ENCODE measurements at regions of chr11 and their contacts with region 1.

Region 1: DNA sequence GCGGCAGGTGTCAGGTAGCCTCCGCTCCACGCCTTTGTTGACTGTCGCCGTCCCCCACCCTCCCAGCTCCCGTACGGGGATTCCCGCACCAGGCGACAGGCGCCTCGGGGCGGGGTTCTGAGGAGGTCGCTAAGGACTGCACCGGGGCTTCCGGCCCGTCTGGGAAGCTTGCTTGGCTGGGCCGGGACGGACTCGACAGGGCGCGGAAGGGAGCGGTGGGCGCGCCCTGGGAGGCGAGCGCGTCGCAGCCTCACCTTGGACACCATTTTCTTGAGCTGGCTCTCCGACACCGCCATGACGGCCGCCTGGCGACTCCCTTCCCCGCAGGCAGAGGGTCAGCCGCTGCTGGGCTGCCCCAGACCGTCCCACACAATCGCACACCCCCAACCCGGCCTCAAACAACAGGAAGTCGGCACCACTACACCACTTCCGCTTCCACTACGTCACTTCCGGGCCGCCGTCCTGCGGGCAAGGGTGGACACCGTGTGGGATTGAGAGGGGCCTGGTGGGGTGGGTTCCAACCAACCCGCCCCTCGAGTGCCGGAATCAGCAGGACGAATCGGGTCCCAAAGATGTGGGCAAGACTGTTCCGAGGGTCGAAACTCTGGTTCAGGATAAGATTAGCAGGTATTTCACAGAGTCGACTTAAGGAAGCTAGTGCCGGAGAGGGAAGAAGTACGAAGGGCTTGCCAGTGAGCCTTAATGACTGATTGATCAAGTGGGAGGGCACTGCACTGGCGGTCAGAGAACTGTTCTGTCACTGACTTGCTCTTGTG is at the start of gene TSG101:
- DNase-seq: peak; percentile 94
- H3K4me3 Mint-ChIP-seq: peak within 1 kb of the TSS; percentile 100
- H3K27ac Mint-ChIP-seq: peak within 1 kb of the TSS; percentile 100
- H3K4me1 Mint-ChIP-seq: peaks cover 45% of the 10 kb centered on the region
- H3K27me3 Mint-ChIP-seq: no peaks in the 10 kb centered on the region
- total RNA-seq, gene TSG101: 33.2 to 40.5 TPM

Region 2: DNA sequence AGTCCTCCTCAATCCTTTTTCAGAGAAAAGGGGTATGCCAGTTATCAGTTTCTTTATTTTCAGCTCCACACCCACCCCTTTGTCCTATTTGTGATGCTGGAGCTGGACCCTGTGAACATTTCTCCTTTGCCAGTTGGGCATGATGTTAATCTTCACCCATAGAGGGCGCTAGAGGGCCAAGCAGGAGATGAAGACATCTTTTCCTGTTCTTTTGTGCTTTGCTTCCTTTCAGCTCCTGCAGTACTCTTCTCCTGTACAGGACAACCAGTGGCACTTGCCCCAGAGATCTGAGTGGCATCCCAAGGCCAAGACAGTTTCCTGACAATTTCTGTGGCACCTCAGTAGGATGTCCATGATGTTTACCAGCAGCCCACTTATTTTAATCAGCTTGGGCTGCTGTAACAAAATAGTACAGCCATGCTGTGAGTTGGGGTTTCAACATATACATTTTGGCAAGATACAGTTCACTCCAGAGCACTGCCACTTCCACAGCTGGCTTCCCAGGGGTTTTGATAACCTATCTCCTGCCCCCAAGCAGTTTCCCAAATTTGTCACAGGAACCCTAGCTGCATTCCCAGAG is 282.8 kb before region 1 on chr11:
- CTCF ChIA-PET with region 1: interaction called, 11 read pairs
- intact Hi-C with region 1: loop called (anchors 1 kb)
- DNase-seq: peak; percentile 81
- H3K4me3 Mint-ChIP-seq: no peak overlapping the region
- H3K27ac Mint-ChIP-seq: no peak overlapping the region
- H3K4me1 Mint-ChIP-seq: peaks cover 6% of the 10 kb centered on the region
- H3K27me3 Mint-ChIP-seq: peaks cover 4% of the 10 kb centered on the region

Region 3: DNA sequence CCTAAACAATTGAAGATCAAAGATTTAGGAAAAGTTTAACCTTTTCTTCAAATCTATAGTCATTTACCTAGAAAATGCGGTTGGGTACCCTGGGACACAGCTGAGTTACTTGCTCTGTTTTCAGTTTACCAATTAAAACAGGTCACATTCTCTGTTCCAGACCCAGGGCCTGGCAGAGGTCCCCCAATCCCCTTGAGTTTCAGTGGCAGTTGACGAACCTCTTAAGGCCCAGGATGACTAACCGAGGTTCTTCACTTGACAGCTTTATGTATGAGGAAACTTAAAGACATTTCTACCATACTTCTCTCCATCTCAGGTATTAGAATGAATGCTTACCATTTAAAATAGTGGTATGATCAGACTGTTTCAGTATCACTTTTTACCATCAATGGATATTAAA is 54.7 kb before region 1 on chr11:
- CTCF ChIA-PET with region 1: interaction called, 5 read pairs
- intact Hi-C with region 1: loop called (anchors 2 kb)
- DNase-seq: peak; percentile 40
- H3K4me3 Mint-ChIP-seq: no peak overlapping the region
- H3K27ac Mint-ChIP-seq: no peak overlapping the region
- H3K4me1 Mint-ChIP-seq: peaks cover 21% of the 10 kb centered on the region
- H3K27me3 Mint-ChIP-seq: no peaks in the 10 kb centered on the region

Region 4: GRCh38 chr11:18615628-18616392 is 89.1 kb after region 1 on chr11:
- CTCF ChIA-PET with region 1: no interaction called
- intact Hi-C with region 1: loop called (anchors 1 kb)
- DNase-seq: no peak
- H3K4me3 Mint-ChIP-seq: no peak overlapping the region
- H3K27ac Mint-ChIP-seq: peak overlapping the region; percentile 78
- H3K4me1 Mint-ChIP-seq: peaks cover 46% of the 10 kb centered on the region
- H3K27me3 Mint-ChIP-seq: no peaks in the 10 kb centered on the region

Region 5: GRCh38 chr11:18669220-18669598 is 142.5 kb after region 1 on chr11:
- CTCF ChIA-PET with region 1: no interaction called
- intact Hi-C with region 1: loop called (anchors 5 kb)
- DNase-seq: peak; percentile 23
- H3K4me3 Mint-ChIP-seq: no peak overlapping the region
- H3K27ac Mint-ChIP-seq: peak overlapping the region; percentile 63
- H3K4me1 Mint-ChIP-seq: peaks cover 70% of the 10 kb centered on the region
- H3K27me3 Mint-ChIP-seq: no peaks in the 10 kb centered on the region